Tibial artery (tissue), 4 donors: ENCODE measurements at regions of chr1 and their contacts with region 1.

Region 1: DNA sequence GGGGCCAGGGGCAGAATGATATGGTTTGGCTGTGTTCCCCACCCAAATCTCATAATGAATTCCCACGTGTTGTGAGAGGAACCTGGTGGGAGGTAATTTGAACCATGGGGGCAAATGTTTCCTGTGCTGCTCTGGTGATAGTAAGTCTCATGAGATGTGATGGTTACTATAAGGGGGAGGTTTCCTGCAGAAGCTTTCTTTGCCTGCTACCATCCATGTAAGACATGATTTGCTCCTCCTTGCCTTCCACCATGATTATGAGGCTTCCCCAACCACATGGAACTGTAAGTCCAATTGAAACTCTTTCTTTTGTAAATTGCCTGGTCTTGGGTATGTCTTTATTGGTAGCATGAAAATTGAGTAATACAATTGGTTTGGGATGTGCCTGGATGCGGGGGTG is 33.7 kb upstream of the LIN9 start:
- DNase-seq: no peak
- H3K4me3 ChIP-seq: no peak overlapping the region
- H3K27ac ChIP-seq: no peak overlapping the region
- H3K4me1 ChIP-seq: no peaks in the 10 kb centered on the region
- H3K27me3 ChIP-seq: peaks cover 0 to 3% of the 10 kb centered on the region in 2 donors
- CTCF ChIP-seq: no peak

Region 2: GRCh38 chr1:226296911-226297310 is 45.7 kb before region 1 on chr1:
- intact Hi-C with region 1: loop called (anchors 2 kb)
- DNase-seq: no peak
- H3K4me3 ChIP-seq: no peak overlapping the region
- H3K27ac ChIP-seq: no peak overlapping the region
- H3K4me1 ChIP-seq: no peaks in the 10 kb centered on the region
- H3K27me3 ChIP-seq: no peaks in the 10 kb centered on the region
- CTCF ChIP-seq: no peak

Region 3: GRCh38 chr1:226662642-226663326 is 320.1 kb after region 1 on chr1:
- intact Hi-C with region 1: no loop called
- DNase-seq: peak; percentile 94 to 95
- H3K4me3 ChIP-seq: peak overlapping the region in 1 of 2 donors; percentile 4
- H3K27ac ChIP-seq: peak overlapping the region; percentile 75 to 84
- H3K4me1 ChIP-seq: peaks cover 7 to 91% (median 72%) of the 10 kb centered on the region in 4 donors
- H3K27me3 ChIP-seq: no peaks in the 10 kb centered on the region
- CTCF ChIP-seq: no peak